ENCODE measurements at regions of chr6 and their contacts with region 1.

Region 1: DNA sequence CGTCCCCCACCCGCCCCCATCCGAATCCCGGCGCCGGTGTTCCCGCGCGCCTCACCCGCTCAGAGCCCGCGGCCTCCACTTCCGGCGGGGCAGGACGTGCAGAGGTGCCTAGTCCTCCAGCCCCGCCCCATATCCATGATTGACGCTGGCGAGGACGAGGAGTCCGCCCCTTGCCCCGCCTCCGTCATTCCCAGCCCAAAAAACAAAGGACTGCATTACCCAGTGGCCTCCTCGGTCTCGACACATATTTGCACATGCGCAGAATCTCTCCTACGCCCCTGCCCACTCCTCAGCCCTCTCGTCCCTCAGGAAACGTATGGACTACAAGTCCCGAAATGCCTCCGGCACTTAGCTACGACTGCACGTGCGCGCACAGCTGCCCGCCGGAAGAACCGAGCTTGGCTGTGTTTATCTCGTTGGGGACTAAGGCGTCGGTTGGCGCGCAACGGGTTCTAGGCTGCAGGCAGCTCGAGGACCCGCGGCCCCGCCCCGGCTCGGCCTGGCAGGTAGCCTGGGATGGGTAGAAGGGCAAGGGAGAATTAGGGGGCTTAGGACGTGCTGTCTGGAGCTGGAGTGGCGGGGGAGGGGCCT is at the starts of genes KLHDC3 and MEA1:
- DNase-seq: peak; percentile 94 to 99
- ATAC-seq: peak; percentile 94 to 96
- H3K4me3 ChIP-seq: peak within 1 kb of the TSS; percentile 92
- H3K27ac ChIP-seq: peak within 1 kb of the TSS; percentile 87 to 91
- H3K4me1 ChIP-seq: peaks cover 13% of the 10 kb centered on the region; the same call in 1 of the 3 replicates
- CTCF ChIP-seq: no peak
- EP300 ChIP-seq: no peak
- POLR2A ChIP-seq: 0 out of 2 replicates have a peak, but pooled peaks have one; percentile 36
- RAD21 ChIP-seq: no peak
- polyA plus RNA-seq, gene KLHDC3: 18.8 and 21.3 TPM in 2 replicates
- polyA plus RNA-seq, gene MEA1: 58.6 and 63.4 TPM in 2 replicates

Region 2: DNA sequence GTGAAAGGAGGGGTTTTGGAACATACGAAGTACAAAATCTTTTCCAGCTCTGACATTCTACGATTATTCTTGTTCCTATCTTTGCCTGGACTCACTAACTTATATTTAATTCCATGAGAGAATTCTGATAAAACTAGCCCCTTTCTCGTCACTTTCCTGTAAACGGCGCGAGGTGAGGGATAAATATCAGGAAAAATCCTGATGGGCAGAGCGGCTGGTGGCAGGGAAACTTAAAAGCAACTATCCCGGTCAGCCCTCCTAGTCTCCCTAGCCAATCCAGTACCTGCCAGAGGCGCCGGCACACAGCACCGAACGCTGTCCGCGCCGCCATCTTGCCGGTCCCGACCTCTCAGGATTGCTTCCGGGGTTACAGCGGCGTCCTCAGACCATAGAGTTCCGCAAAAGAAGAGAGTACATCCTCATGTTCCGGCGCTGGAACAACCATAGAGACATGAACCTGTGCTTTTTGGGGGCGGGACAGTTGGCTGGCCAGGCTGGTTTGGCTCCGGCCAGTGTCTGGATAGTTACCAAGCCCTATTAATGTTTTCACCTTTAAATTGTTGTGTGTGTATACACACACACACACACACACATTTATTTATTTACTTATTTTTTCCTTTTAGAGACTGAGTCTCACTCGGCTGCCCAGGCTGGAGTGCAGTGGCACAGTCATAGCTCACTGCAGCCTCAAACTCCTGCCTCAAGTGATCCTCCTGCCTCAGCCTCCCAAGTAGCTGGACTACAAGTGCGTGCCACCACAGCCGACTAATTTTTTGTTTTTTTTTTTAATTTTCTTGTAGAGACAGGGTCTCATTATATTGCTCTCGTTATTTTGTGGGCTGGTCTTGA is 796.2 kb before region 1 on chr6 and contains the start of gene MRPS10:
- CTCF ChIA-PET with region 1: no interaction called
- POLR2A ChIA-PET with region 1: no interaction called
- DNase-seq: peak; percentile 85 to 95
- ATAC-seq: peak; percentile 99
- H3K4me3 ChIP-seq: peak within 1 kb of the TSS; percentile 88
- H3K27ac ChIP-seq: peak within 1 kb of the TSS; percentile 92 to 97
- H3K4me1 ChIP-seq: peaks cover 34% of the 10 kb centered on the region; the same call in 2 of the 3 replicates
- CTCF ChIP-seq: no peak
- EP300 ChIP-seq: no peak
- POLR2A ChIP-seq: peak; percentile 66
- RAD21 ChIP-seq: no peak
- polyA plus RNA-seq, gene MRPS10: 41.7 and 60.7 TPM in 2 replicates

Region 3: GRCh38 chr6:43053545-43054205 is 39.7 kb after region 1 on chr6 and contains the start of gene CUL7:
- CTCF ChIA-PET with region 1: interaction called, 3 read pairs
- POLR2A ChIA-PET with region 1: interaction called, 15 read pairs
- DNase-seq: peak; percentile 89 to 95
- ATAC-seq: peak; percentile 95 to 98
- H3K4me3 ChIP-seq: peak within 1 kb of the TSS; percentile 94
- H3K27ac ChIP-seq: peak within 1 kb of the TSS; percentile 99 to 100
- H3K4me1 ChIP-seq: peaks cover 21% of the 10 kb centered on the region
- CTCF ChIP-seq: no peak
- EP300 ChIP-seq: no peak
- POLR2A ChIP-seq: peak; percentile 80
- RAD21 ChIP-seq: no peak
- polyA plus RNA-seq, gene CUL7: 12.1 and 14.6 TPM in 2 replicates

Region 4: DNA sequence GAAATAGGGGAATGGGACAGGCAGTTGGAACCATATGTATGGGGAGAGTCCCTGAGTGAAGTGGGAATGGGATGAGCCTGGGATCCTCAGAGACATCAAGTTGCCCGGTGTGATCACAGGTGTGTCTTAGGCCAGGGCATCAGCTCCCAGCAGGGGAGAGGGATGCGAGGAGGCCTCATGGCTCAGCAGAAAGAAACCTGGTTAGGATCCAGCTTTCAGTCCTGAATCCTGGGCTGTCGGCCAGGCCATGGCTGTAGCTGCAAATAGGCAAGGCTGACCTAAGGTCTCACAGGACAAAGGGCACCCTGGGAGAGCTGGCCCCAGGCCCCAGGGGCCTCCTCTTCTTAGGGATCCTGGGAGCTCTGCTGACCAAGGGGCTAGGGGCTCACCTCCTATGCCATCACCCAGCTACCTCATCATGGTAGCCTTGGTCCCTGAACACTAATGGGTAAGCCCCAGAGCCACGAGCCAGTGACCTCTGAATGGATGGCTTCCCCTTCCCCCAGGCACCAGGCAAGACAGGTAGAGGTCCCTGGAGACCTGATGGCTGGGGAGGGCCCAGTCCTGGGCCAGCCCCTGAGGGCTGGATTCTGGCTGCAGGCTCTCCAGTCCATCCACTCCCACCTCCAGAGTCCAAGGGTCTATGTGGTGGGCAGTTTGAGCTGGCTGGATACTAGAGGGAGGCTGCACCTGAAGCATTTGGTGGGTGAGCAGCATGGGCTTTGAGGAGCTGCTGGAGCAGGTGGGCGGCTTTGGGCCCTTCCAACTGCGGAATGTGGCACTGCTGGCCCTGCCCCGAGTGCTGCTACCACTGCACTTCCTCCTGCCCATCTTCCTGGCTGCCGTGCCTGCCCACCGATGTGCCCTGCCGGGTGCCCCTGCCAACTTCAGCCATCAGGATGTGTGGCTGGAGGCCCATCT is 284.0 kb after region 1 on chr6 and contains the start of gene SLC22A7:
- CTCF ChIA-PET with region 1: no interaction called
- POLR2A ChIA-PET with region 1: no interaction called
- DNase-seq: no peak
- ATAC-seq: no peak
- H3K4me3 ChIP-seq: no peak within 1 kb of the TSS
- H3K27ac ChIP-seq: no peak within 1 kb of the TSS
- H3K4me1 ChIP-seq: 0 out of 3 replicates have a peak, but pooled peaks cover 3% of the 10 kb centered on the region
- CTCF ChIP-seq: no peak
- EP300 ChIP-seq: no peak
- POLR2A ChIP-seq: no peak
- RAD21 ChIP-seq: no peak
- polyA plus RNA-seq, gene SLC22A7: not detected in 2 replicates

Measured in A549 (cell line).